Esophagus muscularis mucosa (tissue), 4 donors: ENCODE measurements at regions of chr3 and their contacts with region 1.

Region 1: GRCh38 chr3:54427941-54428871 is 305.9 kb downstream of the CACNA2D3 start:
- DNase-seq: no peak
- H3K4me3 ChIP-seq: no peak overlapping the region
- H3K27ac ChIP-seq: no peak overlapping the region
- H3K4me1 ChIP-seq: peaks cover 0 to 13% (median 4%) of the 10 kb centered on the region in 4 donors
- H3K27me3 ChIP-seq: no peaks in the 10 kb centered on the region
- CTCF ChIP-seq: peak; percentile 79 to 85 (median 83)
- EP300 ChIP-seq: no peak
- POLR2A ChIP-seq: no peak

Region 2: DNA sequence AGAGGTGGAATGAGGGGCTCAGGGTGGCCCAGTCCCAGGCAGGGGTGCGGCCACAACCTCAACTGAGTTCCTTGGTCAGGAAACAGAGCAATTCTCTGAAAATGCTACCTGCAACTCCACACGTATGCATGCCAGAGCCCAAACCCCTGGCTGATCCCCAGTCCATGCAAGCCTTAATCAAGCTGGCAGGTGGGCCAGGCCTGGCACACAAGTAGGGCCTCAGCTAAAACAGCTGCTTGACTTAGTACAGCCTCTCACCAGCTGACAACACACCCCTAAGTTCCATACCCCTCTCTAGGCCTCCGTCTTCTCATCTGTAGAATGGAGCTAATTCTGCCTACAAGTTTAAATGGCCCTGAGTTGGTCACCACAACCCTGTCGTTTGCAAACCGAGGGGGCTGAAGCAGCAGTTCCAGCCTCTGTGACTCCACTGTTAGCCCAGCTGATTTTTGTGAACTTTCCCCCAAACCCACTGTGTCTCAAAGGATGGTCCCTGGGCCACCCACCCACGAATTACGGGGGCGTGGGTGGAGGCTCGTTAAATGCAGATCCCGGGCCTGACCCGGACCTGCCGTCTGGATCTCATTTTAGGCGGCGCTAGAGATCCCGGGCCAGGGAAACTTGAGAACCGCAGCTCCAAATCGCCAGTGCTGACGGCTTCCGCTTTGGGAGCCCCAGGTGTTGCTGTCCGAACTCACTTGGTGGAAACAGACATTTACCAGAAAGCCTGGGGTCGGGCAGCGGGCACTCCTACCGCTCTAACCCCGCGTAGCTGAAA is 582.9 kb before region 1 on chr3:
- intact Hi-C with region 1: no loop called
- DNase-seq: no peak
- H3K4me3 ChIP-seq: peak overlapping the region; percentile 63 to 86 (median 72)
- H3K27ac ChIP-seq: peak overlapping the region; percentile 51 to 83 (median 70)
- H3K4me1 ChIP-seq: peaks cover 8 to 19% (median 16%) of the 10 kb centered on the region in 4 donors
- H3K27me3 ChIP-seq: peaks cover 0 to 31% (median 2%) of the 10 kb centered on the region in 4 donors
- CTCF ChIP-seq: peak in 2 of 3 experiments; percentile 16 to 19
- EP300 ChIP-seq: no peak
- POLR2A ChIP-seq: no peak

Region 3: DNA sequence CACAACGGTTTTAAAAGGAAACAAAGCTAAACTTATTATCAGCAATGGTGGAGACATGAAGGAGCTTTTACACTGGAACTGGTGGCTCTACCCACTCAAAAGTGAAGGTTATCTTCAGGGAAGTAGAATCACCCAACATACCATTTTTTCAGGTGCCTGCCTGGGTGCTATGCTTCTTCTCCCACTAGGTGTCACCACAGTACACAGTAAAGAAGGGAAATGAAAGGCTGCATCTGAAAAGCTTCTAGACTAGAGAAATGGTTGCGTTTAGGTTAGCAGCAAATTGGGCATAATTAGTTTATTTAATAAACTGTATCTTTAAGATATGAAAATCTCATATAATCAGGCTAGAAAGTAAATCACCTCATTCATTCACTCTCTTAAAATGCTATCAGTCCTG is 489.6 kb before region 1 on chr3:
- intact Hi-C with region 1: loop called (anchors 5 kb)
- DNase-seq: no peak
- H3K4me3 ChIP-seq: no peak overlapping the region
- H3K27ac ChIP-seq: no peak overlapping the region
- H3K4me1 ChIP-seq: no peaks in the 10 kb centered on the region
- H3K27me3 ChIP-seq: peaks cover 0 to 10% (median 0%) of the 10 kb centered on the region in 4 donors
- CTCF ChIP-seq: peak; percentile 70 to 81 (median 76)
- EP300 ChIP-seq: no peak
- POLR2A ChIP-seq: no peak